A549 (cell line): ENCODE measurements at regions of chr1 and their contacts with region 1.

Region 1: GRCh38 chr1:25796811-25797458 is 3.1 kb upstream of the SELENON start:
- DNase-seq: peak; percentile 36 to 72
- ATAC-seq: peak; percentile 67 to 77; a peak in 5 of 6 replicates
- H3K4me3 ChIP-seq: no peak overlapping the region
- H3K27ac ChIP-seq: peak overlapping the region in 1 of 2 experiments; percentile 55; a peak in 2 of 6 replicates
- H3K4me1 ChIP-seq: peaks cover 8% of the 10 kb centered on the region; the same call in 2 of the 3 replicates
- CTCF ChIP-seq: peak; percentile 76
- EP300 ChIP-seq: no peak
- POLR2A ChIP-seq: no peak
- RAD21 ChIP-seq: peak; percentile 84 to 85

Region 2: GRCh38 chr1:25608488-25609178 is 188.3 kb before region 1 on chr1:
- CTCF ChIA-PET with region 1: interaction called, 30 read pairs
- POLR2A ChIA-PET with region 1: no interaction called
- DNase-seq: peak; percentile 64
- ATAC-seq: peak; percentile 81 to 90; a peak in 5 of 6 replicates
- H3K4me3 ChIP-seq: no peak overlapping the region
- H3K27ac ChIP-seq: no peak overlapping the region
- H3K4me1 ChIP-seq: 0 out of 3 replicates have a peak, but pooled peaks cover 4% of the 10 kb centered on the region
- CTCF ChIP-seq: peak; percentile 50
- EP300 ChIP-seq: no peak
- POLR2A ChIP-seq: no peak
- RAD21 ChIP-seq: peak; percentile 59 to 64

Region 3: GRCh38 chr1:25774921-25775801 is 21.8 kb before region 1 on chr1:
- CTCF ChIA-PET with region 1: interaction called, 11 read pairs
- POLR2A ChIA-PET with region 1: no interaction called
- DNase-seq: no peak
- ATAC-seq: peak in 1 of 2 experiments; percentile 33; a peak in 2 of 6 replicates
- H3K4me3 ChIP-seq: no peak overlapping the region
- H3K27ac ChIP-seq: peak overlapping the region; percentile 73 to 81
- H3K4me1 ChIP-seq: peaks cover 45% of the 10 kb centered on the region
- CTCF ChIP-seq: no peak
- EP300 ChIP-seq: no peak
- POLR2A ChIP-seq: no peak
- RAD21 ChIP-seq: no peak

Region 4: GRCh38 chr1:25810341-25811299 is 13.7 kb after region 1 on chr1:
- CTCF ChIA-PET with region 1: interaction called, 21 read pairs
- POLR2A ChIA-PET with region 1: interaction called, 6 read pairs
- DNase-seq: peak; percentile 44 to 54
- ATAC-seq: peak; percentile 70 to 85
- H3K4me3 ChIP-seq: no peak overlapping the region
- H3K27ac ChIP-seq: no peak overlapping the region
- H3K4me1 ChIP-seq: no peaks in the 10 kb centered on the region
- CTCF ChIP-seq: peak; percentile 74
- EP300 ChIP-seq: no peak
- POLR2A ChIP-seq: no peak
- RAD21 ChIP-seq: peak; percentile 86 to 89

Region 5: DNA sequence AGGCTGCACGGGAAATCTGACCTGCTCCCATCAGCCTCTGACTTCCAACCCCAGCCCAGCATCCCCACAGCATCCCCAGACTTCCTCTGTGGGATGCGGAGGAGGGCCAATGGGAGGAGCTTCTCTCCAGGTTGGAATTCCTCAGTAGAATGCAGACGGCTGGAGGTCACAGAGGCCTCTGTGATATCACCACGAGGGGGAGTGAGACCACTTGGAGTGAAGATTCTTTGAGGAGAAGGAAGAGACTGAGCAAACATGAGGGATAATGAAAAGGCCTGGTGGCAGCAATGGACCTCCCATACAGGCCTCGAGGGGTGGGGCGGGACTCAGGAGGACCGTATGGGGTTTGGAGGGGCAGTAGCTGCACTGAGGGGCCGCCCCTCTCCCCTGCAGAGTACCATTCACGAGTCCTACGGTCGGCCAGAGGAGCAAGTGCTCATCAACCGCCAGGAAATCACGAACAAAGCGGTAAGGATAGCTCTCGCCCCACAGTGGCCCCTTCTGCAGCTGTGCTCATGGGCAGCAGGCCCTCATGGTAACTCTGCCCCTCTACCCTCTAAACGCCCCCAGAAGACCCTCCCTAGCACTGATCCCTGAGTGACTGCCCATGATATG is 393.5 kb after region 1 on chr1 and contains the start of gene CATSPER4:
- CTCF ChIA-PET with region 1: no interaction called
- POLR2A ChIA-PET with region 1: no interaction called
- DNase-seq: peak; percentile 44 to 57
- ATAC-seq: peak; percentile 62 to 81; a peak in 5 of 6 replicates
- H3K4me3 ChIP-seq: no peak within 1 kb of the TSS
- H3K27ac ChIP-seq: no peak within 1 kb of the TSS
- H3K4me1 ChIP-seq: no peaks in the 10 kb centered on the region
- CTCF ChIP-seq: no peak
- EP300 ChIP-seq: no peak
- POLR2A ChIP-seq: no peak
- RAD21 ChIP-seq: peak in 1 of 2 experiments; percentile 31; a peak in 1 of 5 replicates
- polyA plus RNA-seq, gene CATSPER4: not detected in 2 replicates